ENCODE measurements at regions of chr3 and their contacts with region 1.

Region 1: GRCh38 chr3:79587150-79587549 is 180.6 kb downstream of the ROBO1 start:
- DNase-seq: no peak
- H3K4me3 ChIP-seq: no peak overlapping the region
- H3K27ac ChIP-seq: no peak overlapping the region
- H3K4me1 ChIP-seq: no peaks in the 10 kb centered on the region
- H3K27me3 ChIP-seq: no peaks in the 10 kb centered on the region
- CTCF ChIP-seq: no peak
- POLR2A ChIP-seq: no peak

Region 2: GRCh38 chr3:80592792-80593191 is 1005.6 kb after region 1 on chr3:
- intact Hi-C with region 1: loop called (anchors 5 kb)
- DNase-seq: no peak
- H3K4me3 ChIP-seq: no peak overlapping the region
- H3K27ac ChIP-seq: no peak overlapping the region
- H3K4me1 ChIP-seq: no peaks in the 10 kb centered on the region
- H3K27me3 ChIP-seq: no peaks in the 10 kb centered on the region
- CTCF ChIP-seq: no peak
- POLR2A ChIP-seq: no peak

Measured in vagina (tissue), 2 donors.